Activated naive CD4-positive, alpha-beta T cell treated with anti-CD3 and anti-CD28 coated beads for 36 hours (primary cell): ENCODE measurements at regions of chr9 and their contacts with region 1.

Region 1: GRCh38 chr9:116494815-116495634 is 192.1 kb upstream of the TRIM32 start:
- DNase-seq: peak; percentile 58
- H3K4me3 Mint-ChIP-seq: no peak overlapping the region
- H3K27ac Mint-ChIP-seq: no peak overlapping the region
- H3K4me1 Mint-ChIP-seq: no peaks in the 10 kb centered on the region
- H3K27me3 Mint-ChIP-seq: no peaks in the 10 kb centered on the region

Region 2: GRCh38 chr9:116163293-116164055 is 331.6 kb before region 1 on chr9:
- CTCF ChIA-PET with region 1: no interaction called
- intact Hi-C with region 1: loop called (anchors 10 kb)
- DNase-seq: no peak
- H3K4me3 Mint-ChIP-seq: no peak overlapping the region
- H3K27ac Mint-ChIP-seq: no peak overlapping the region
- H3K4me1 Mint-ChIP-seq: no peaks in the 10 kb centered on the region
- H3K27me3 Mint-ChIP-seq: peaks cover 20% of the 10 kb centered on the region

Region 3: DNA sequence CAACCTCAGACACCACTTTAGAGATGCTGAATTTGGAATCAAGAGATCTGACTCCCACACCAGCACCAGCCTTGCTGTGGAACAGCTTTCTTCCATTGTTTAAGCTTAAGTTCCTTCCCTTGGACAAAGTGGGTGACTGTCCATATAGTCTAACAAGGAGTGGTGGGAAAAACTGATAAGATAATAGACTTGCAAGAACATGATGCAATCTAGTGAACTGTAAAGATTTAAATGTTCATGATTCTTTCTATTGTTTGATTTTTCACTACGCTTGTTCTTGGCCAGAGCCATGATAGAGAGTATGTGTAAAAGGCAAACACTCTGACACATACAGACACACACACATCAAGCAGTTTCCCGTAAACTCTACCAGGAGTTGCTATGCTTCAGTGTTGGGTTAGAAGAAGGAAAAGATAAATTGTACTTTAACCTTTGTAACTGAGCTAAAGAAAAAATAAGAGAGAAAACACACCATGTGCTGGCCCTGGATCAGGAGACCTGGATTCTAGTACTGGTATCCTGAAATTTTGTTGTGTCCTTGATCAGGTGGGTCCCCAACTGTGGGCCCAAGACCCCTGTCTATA is 247.1 kb before region 1 on chr9:
- CTCF ChIA-PET with region 1: no interaction called
- intact Hi-C with region 1: no loop called
- DNase-seq: no peak
- H3K4me3 Mint-ChIP-seq: no peak overlapping the region
- H3K27ac Mint-ChIP-seq: no peak overlapping the region
- H3K4me1 Mint-ChIP-seq: no peaks in the 10 kb centered on the region
- H3K27me3 Mint-ChIP-seq: no peaks in the 10 kb centered on the region

Region 4: GRCh38 chr9:116313638-116314037 is 181.4 kb before region 1 on chr9:
- CTCF ChIA-PET with region 1: no interaction called
- intact Hi-C with region 1: no loop called
- DNase-seq: no peak
- H3K4me3 Mint-ChIP-seq: no peak overlapping the region
- H3K27ac Mint-ChIP-seq: no peak overlapping the region
- H3K4me1 Mint-ChIP-seq: no peaks in the 10 kb centered on the region
- H3K27me3 Mint-ChIP-seq: no peaks in the 10 kb centered on the region

Region 5: DNA sequence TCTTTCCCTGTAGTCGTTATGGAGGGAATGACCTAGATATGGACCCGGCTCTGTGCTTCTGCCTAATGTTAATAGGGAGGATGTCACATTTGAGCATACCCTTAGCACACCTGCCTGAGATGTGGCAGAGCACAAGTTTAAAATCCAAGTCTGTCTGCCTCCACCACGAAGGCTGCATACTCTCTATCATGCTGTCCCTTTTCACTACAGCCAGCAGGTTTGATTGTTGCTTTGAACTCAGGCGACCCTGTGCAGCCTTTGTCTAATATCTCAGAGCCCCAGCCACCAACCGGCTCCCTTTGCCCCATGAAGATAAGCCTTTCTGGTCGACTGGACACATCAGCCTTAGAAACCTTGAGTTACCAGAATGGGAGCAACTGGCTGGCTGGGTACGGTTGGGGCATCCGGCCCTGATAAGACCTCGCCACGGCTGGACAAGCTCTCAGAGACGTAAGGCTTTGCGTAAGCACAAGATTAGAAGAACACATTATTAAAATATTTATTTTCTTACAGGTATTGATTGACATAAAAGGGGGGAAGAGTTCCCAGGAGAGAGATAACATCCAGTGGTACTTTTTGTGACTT is 29.9 kb before region 1 on chr9:
- CTCF ChIA-PET with region 1: no interaction called
- intact Hi-C with region 1: no loop called
- DNase-seq: no peak
- H3K4me3 Mint-ChIP-seq: no peak overlapping the region
- H3K27ac Mint-ChIP-seq: no peak overlapping the region
- H3K4me1 Mint-ChIP-seq: no peaks in the 10 kb centered on the region
- H3K27me3 Mint-ChIP-seq: no peaks in the 10 kb centered on the region

Region 6: GRCh38 chr9:116646661-116647512 is 151.9 kb after region 1 on chr9:
- CTCF ChIA-PET with region 1: no interaction called
- intact Hi-C with region 1: loop called (anchors 1 kb)
- DNase-seq: no peak
- H3K4me3 Mint-ChIP-seq: no peak overlapping the region
- H3K27ac Mint-ChIP-seq: no peak overlapping the region
- H3K4me1 Mint-ChIP-seq: no peaks in the 10 kb centered on the region
- H3K27me3 Mint-ChIP-seq: no peaks in the 10 kb centered on the region